ENCODE measurements at regions of chr17 and their contacts with region 1.

Region 1: DNA sequence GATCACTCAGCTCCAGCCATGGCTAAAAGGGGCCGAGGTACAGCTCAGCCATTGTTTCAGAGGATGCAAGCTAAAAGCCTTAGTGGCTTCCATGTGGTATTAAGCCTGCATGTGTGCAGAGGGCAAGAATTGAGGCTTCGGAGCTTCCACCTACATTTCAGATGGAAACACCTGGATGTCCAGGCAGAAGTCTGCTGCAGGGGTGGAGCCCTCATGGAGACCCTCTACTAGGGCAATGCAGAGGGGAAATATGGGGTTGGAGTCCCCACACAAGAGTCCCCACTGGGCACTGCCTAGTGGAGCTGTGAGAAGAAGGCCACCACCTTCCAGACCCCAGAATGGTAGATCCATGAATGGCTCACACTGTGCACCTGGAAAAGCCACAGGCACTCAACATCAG is 14.7 kb upstream of the PSMD11 start:
- DNase-seq: peak; percentile 9
- H3K4me3 ChIP-seq: no peak overlapping the region
- H3K27ac ChIP-seq: no peak overlapping the region
- H3K4me1 ChIP-seq: no peaks in the 10 kb centered on the region
- CTCF ChIP-seq: no peak

Region 2: DNA sequence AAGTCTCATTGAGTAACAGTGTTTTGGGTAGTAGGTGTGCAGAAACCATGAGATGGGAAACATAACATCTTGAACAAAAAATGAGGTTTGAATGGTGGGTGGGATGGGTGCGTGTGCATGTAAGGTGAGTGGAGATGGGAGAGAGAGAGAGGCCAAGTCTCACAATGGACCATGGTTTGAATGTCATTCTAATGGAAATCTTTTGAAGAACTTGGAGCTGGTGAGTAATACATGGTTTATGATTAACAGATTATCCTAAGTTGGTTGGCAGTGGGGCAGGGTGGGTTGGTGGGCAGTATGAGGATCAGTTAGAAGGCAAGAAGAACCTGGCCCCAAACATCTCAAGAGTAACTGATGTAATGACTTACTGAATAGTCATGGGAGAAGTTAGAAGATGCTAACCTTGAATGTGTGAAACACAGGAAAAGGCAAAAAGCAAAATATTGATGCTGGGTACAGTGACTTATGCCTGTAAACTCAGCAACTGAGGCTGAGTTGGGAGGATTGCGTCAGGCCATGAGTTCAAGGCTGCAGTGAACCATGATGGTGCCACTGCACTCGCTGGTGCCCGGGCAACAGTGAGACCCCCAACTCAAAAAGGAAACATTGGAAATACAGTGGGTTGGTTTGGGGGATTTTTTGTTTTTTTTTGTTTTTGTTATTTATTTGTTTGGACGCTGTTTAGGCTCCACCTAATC is 46.9 kb before region 1 on chr17:
- CTCF ChIA-PET with region 1: no interaction called
- POLR2A ChIA-PET with region 1: no interaction called
- intact Hi-C with region 1: loop called (anchors 5 kb)
- DNase-seq: no peak
- H3K4me3 ChIP-seq: no peak overlapping the region
- H3K27ac ChIP-seq: no peak overlapping the region
- H3K4me1 ChIP-seq: no peaks in the 10 kb centered on the region
- CTCF ChIP-seq: no peak

Region 3: DNA sequence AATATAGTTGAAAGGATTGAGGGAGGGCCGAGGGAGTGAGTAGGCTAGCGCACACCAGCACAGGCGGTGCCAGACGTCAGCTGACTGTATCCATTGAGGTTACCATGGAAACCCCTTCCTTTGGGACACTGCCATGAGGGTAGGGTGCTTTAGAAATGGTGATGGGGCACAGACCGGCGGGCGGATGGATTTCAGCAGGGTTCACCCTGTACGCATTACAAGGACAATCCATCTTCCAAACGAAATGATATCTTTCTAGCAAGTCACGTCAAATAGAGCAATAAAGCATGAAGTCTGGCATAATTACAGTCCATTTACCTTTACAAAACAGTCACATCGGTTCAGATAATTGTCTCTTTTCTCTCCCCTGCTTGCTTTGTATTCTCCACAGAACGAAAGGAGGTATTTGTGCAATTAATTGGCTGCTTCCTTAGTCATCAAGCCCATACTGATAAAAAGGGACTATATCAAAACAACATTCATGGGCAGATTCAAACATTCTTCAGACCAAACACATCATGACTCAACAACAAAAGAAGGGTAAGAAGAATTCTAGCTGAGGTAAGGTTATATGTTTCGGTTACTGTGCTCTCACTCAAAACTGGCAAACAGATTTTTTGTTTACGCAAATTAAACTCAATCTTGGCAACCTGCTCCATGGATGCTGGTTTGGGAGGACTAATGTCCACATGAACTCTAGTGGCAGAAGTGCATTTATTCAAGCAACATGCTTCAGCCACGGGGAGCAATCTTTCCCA is 197.8 kb after region 1 on chr17:
- CTCF ChIA-PET with region 1: no interaction called
- POLR2A ChIA-PET with region 1: no interaction called
- intact Hi-C with region 1: no loop called
- DNase-seq: no peak
- H3K4me3 ChIP-seq: no peak overlapping the region
- H3K27ac ChIP-seq: no peak overlapping the region
- H3K4me1 ChIP-seq: no peaks in the 10 kb centered on the region
- CTCF ChIP-seq: no peak

Measured in OCI-LY7 (cell line).